ENCODE measurements at regions of chr12 and their contacts with region 1.

Region 1: GRCh38 chr12:45170456-45171042 is 45.3 kb upstream of the ANO6 start:
- DNase-seq: peak; percentile 78
- ATAC-seq: peak; percentile 78

Region 2: GRCh38 chr12:44930972-44931600 is 239.5 kb before region 1 on chr12:
- intact Hi-C with region 1: no loop called
- DNase-seq: no peak
- ATAC-seq: peak; percentile 58

Region 3: GRCh38 chr12:45368841-45369489 is 198.4 kb after region 1 on chr12:
- intact Hi-C with region 1: no loop called
- DNase-seq: no peak
- ATAC-seq: no peak

Region 4: GRCh38 chr12:45388545-45388944 is 218.0 kb after region 1 on chr12:
- intact Hi-C with region 1: loop called (anchors 5 kb)
- DNase-seq: no peak
- ATAC-seq: peak; percentile 65